Esophagus muscularis mucosa (tissue), 4 donors: ENCODE measurements at regions of chr12 and their contacts with region 1.

Region 1: DNA sequence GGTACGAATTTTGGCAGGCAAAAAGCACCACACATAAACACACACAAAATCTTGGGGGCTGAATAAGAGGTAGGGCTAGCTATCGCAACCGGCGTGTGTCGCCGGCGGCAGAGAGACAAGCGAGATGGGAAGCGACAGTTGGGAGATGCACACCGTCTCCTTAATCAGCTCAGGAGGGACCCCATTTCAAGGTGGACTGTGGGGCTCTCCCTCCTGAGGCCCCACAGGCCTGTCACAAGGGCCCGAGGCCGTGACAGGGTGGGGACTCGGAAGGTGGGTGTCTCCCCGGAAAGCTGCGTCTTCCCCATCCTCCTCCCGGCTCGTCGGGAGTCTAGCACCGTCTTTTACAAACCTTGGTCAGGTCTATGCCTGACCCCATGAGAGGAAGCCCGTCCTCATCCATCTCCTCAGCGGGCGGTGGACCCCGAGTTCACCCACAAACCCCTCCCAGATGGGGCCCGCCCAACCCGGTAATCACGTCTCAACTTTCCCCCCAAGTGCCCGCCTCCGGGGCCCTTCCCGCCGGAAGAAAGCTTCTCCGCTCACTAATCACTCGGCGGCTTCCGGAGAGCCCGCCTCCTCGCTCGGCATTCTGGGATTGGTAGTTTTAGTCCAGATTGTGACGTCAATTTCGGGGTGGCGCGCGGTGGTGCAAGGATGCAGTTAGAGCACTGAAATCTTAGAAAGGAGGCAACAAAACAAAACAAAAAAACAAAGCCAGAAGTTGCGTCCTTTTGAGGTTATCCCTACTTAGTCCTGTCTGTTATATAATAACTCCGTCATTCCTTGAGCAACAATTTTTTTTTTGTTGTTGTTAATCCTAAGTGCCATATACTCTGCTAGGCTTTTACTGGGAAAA is at the start of gene WASHC3:
- DNase-seq: peak; percentile 99
- H3K4me3 ChIP-seq: peak within 1 kb of the TSS; percentile 70 to 85 (median 83)
- H3K27ac ChIP-seq: peak within 1 kb of the TSS; percentile 86 to 91 (median 90)
- H3K4me1 ChIP-seq: peaks cover 0 to 12% (median 10%) of the 10 kb centered on the region in 4 donors
- H3K27me3 ChIP-seq: no peaks in the 10 kb centered on the region
- CTCF ChIP-seq: no peak
- EP300 ChIP-seq: no peak
- POLR2A ChIP-seq: peak; percentile 90
- total RNA-seq, gene WASHC3: 85.7 to 101 (median 86.8) TPM

Region 2: GRCh38 chr12:101697197-101697929 is 364.4 kb before region 1 on chr12 and contains the start of gene CHPT1:
- intact Hi-C with region 1: loop called (anchors 5 kb)
- DNase-seq: peak; percentile 94
- H3K4me3 ChIP-seq: peak within 1 kb of the TSS; percentile 70 to 94 (median 90)
- H3K27ac ChIP-seq: peak within 1 kb of the TSS; percentile 89 to 97 (median 96)
- H3K4me1 ChIP-seq: peaks cover 51 to 61% (median 56%) of the 10 kb centered on the region in 4 donors
- H3K27me3 ChIP-seq: no peaks in the 10 kb centered on the region
- CTCF ChIP-seq: no peak
- EP300 ChIP-seq: no peak
- POLR2A ChIP-seq: no peak
- total RNA-seq, gene CHPT1: 57.5 to 180 (median 83.8) TPM